GM10248 (cell line): ENCODE measurements at regions of chr4 and their contacts with region 1.

Region 1: GRCh38 chr4:184263910-184264732 is 46.4 kb upstream of the ENPP6 start:
- DNase-seq: peak; percentile 72
- CTCF ChIP-seq: peak; percentile 80

Region 2: DNA sequence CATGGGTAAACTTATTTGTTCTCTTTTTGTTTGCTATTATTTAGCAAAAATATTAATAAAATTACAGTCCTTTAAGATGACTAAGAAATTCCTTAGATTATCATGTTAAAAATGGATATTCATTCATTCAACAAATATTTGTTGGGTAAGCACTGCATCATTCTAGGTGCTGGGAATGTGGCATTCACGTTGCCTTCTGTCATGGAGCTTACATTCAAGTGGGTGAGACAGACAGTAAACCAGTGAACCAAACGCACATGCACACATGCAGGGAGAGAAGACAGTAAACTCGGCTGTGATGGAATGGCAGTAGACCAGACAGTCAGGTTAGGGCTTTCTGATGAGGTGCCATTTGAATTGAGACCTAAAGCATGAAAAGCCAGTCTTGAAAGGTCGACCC is 267.3 kb before region 1 on chr4:
- CTCF ChIA-PET with region 1: no interaction called
- POLR2A ChIA-PET with region 1: no interaction called
- DNase-seq: no peak
- CTCF ChIP-seq: no peak

Region 3: GRCh38 chr4:184066584-184067300 is 197.4 kb before region 1 on chr4:
- CTCF ChIA-PET with region 1: no interaction called
- POLR2A ChIA-PET with region 1: no interaction called
- DNase-seq: no peak
- CTCF ChIP-seq: no peak

Region 4: DNA sequence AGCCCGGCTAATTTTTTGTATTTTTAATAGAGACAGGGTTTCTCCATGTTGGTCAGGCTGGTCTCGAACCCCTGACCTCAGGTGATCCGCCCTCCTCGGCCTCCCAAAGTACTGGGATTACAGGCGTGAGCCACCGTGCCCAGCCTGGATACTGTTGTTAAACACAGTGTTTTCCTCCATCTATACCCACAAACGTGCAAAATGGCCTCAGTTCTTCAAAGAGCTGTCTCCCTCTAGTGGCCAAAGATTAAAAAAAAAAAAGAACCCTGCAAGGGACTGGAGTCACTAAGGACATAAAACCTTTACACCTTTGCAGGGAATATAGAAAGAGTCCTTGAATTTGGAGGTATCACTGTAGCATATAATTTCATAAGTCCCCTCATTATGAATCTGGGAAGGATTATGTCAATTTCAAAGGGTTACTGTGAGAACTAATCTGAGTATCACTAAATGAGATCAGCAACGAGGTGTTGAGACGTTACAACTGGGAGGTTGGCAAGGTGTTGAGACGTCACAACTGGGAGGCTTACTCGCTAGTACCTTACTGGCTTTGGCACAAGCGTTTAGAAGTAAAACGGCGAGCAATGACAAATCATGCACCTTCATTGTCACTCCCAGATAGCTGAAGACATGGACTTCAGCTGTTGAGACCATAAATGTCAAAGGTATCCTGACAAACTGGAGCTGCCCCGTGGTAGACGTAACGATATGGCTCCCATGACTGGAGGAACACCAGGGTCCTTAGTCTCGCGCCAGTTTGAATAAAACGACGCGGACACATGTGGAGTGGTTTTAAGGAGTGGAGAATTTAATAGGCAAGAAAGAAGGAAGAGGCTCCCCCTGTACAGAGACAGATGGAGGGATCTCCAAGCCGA is 13.1 kb before region 1 on chr4:
- CTCF ChIA-PET with region 1: interaction called, 72 read pairs
- POLR2A ChIA-PET with region 1: no interaction called
- DNase-seq: peak; percentile 60
- CTCF ChIP-seq: peak; percentile 35

Region 5: GRCh38 chr4:184310171-184310567 is 46.0 kb after region 1 on chr4:
- CTCF ChIA-PET with region 1: interaction called, 79 read pairs
- POLR2A ChIA-PET with region 1: interaction called, 6 read pairs
- DNase-seq: peak; percentile 57
- CTCF ChIP-seq: peak; percentile 44

Region 6: GRCh38 chr4:184361443-184361842 is 97.3 kb after region 1 on chr4:
- CTCF ChIA-PET with region 1: interaction called, 12 read pairs
- POLR2A ChIA-PET with region 1: interaction called, 3 read pairs
- DNase-seq: no peak
- CTCF ChIP-seq: no peak

Region 7: GRCh38 chr4:184408021-184408710 is 144.0 kb after region 1 on chr4:
- CTCF ChIA-PET with region 1: interaction called, 11 read pairs
- POLR2A ChIA-PET with region 1: no interaction called
- DNase-seq: no peak
- CTCF ChIP-seq: no peak

Region 8: DNA sequence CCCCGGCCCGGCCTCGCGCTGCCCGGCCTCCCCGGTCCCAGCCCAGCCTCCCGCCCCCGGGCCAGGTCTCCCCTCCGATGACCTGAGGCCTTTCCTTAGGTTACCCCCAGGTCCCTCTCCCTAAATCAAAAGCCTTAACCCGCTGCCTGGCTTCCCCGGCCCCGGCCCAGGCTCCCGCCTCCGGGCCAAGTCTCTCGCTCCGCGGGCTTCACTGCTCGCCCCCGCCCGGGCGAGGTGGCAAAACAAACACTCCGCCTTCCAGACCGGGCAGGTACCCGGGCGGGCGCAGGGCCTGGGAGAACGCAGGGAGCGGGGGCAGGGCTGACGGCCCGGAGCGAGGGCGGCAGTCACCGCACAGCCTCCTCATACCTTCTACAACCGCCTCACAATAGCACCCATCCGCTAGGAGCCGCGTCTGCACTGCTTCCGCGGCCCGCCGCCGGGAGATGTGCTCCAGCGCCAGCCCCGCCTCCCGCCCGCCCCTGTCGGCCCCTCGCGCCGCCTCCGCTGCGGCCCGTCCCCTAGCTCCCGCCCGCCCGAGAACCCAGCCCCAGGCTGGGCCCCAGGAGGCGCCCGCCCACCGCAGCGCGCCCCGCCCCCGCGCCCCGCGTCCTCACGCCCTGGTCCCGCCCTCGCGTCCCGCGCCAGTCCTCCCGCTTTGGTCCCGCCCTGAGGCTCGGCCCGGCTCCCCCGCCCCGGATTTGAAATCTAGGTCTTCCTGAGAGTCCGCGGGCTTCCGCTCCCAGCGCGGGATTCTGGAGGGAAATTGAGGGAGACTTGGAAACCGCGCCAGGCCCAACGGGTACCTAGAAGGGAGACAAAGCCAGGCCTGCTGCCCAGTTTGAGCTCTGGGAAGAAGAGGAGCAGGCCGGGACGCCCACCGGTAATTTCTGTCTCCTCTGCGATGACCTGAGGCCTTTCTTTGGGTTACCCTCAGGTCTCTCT is 385.2 kb after region 1 on chr4 and contains the starts of genes CASP3 and PRIMPOL:
- CTCF ChIA-PET with region 1: interaction called, 13 read pairs
- POLR2A ChIA-PET with region 1: no interaction called
- DNase-seq: peak; percentile 93
- CTCF ChIP-seq: peak; percentile 52

Region 9: GRCh38 chr4:184668511-184669114 is 404.5 kb after region 1 on chr4:
- CTCF ChIA-PET with region 1: no interaction called
- POLR2A ChIA-PET with region 1: no interaction called
- DNase-seq: no peak
- CTCF ChIP-seq: no peak